ENCODE measurements at regions of chr3 and their contacts with region 1.

Region 1: DNA sequence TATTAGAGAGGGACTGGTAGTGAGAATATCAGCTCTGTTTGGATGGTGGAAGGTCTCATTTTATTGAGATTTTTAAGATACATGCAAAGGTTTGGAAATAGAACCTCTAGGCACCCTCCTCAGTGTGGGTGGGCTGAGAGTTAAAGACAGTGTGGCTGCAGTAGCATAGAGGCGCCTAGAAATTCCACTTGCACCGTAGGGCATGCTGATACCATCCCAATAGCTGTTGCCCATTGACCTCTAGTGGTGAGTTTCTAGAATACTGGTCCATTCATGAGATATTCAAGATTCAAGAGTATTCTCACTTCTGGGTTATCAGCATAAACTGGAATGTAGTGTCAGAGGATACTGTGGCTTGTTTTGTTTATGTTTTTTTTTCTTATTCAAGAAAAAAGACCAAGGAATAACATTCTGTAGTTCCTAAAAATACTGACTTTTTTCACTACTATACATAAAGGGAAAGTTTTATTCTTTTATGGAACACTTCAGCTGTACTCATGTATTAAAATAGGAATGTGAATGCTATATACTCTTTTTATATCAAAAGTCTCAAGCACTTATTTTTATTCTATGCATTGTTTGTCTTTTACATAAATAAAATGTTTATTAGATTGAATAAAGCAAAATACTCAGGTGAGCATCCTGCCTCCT is 87.2 kb downstream of the TGFBR2 start:
- DNase-seq: peak in 1 of 2 donors; percentile 59
- ATAC-seq: peak; percentile 76 to 88 (median 84)
- H3K4me3 ChIP-seq: no peak overlapping the region
- H3K27ac ChIP-seq: peak overlapping the region in 7 of 10 donors; percentile 8 to 64 (median 45)
- H3K4me1 ChIP-seq: peaks cover 11 to 94% (median 68%) of the 10 kb centered on the region in 9 donors
- H3K27me3 ChIP-seq: no peaks in the 10 kb centered on the region
- CTCF ChIP-seq: peak; percentile 70 to 90 (median 81)

Region 2: DNA sequence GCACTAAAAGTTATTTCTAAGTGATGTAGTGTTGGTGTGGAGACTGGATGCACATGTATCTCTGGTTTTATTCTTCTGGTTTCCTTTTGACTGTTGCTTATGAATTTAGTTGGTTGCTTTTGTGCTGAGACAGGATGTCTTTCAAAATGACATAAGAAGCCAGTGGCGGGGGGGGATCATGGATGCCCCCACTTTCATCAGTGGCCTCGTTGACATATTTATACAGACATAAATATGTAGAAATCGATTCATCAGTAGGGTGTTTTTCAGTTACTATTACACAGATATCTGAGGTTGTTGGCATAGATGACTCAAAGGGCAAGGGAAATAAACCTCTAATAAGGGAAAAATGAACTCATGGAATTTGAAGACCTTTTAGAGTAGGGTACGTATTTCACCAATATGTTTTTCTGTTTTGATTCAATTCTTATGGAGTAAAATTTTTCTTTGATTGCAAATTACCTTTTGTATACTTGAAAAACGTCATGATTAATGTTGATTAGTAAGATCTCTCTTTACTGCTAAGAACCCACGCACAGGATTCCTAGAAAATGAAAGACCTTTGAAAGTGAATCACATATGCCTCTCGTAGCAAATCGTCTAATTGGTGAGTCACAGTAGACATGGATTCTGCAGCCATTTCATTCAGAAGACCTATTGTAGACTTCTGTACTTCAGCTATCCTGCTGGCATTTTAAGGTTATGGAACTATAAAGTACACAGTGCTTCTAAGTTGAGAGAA is 1510.1 kb before region 1 on chr3:
- intact Hi-C with region 1: no loop called
- DNase-seq: no peak
- ATAC-seq: no peak
- H3K4me3 ChIP-seq: no peak overlapping the region
- H3K27ac ChIP-seq: no peak overlapping the region
- H3K4me1 ChIP-seq: peaks cover 0 to 36% (median 13%) of the 10 kb centered on the region in 9 donors
- H3K27me3 ChIP-seq: no peaks in the 10 kb centered on the region
- CTCF ChIP-seq: no peak

Region 3: GRCh38 chr3:30042274-30042859 is 651.2 kb before region 1 on chr3:
- intact Hi-C with region 1: loop called in 6 of 10 experiments (anchors 2 to 10 kb)
- DNase-seq: peak in 1 of 2 donors; percentile 72
- ATAC-seq: peak in 6 of 8 donors; percentile 43 to 78 (median 64)
- H3K4me3 ChIP-seq: no peak overlapping the region
- H3K27ac ChIP-seq: no peak overlapping the region
- H3K4me1 ChIP-seq: peaks cover 0 to 21% (median 4%) of the 10 kb centered on the region in 9 donors
- H3K27me3 ChIP-seq: no peaks in the 10 kb centered on the region
- CTCF ChIP-seq: peak; percentile 54 to 85 (median 79)

Region 4: DNA sequence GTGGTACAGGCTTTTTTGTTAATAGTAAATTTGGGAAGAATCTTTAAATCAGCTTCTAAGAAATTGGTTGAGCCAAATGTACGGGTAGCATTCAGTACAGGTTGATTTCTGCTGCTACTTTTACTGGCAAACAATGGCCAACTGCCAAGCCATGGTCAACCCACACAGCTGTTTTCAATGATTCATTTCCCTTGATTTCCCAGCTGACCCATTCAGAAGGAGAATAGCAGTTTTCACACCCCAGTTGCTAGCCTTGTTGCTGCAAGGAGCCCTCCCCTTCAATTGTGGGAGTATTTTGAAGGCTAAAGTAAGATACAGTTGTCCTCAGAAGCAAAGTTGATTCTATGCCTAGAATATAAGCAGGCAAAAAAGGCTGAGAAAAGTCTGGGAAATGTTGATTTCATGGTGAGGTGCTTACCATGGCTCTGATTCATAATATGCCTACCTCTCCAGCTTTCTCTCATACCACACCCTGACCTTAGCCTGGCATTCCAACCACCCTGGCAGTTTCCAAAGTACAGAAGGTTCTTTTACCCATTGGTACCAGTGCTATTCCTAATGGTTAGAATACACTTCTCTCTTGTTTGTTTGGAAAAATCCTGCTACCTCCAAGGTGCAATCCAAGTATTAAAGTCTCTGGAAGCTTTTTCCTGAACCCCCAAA is 407.5 kb before region 1 on chr3:
- intact Hi-C with region 1: loop called in 2 of 10 experiments (anchors 5 to 10 kb)
- DNase-seq: peak; percentile 54 to 86
- ATAC-seq: peak; percentile 87 to 96 (median 93)
- H3K4me3 ChIP-seq: no peak overlapping the region
- H3K27ac ChIP-seq: peak overlapping the region in 8 of 10 donors; percentile 21 to 76 (median 64)
- H3K4me1 ChIP-seq: peaks cover 0 to 65% (median 36%) of the 10 kb centered on the region in 9 donors
- H3K27me3 ChIP-seq: no peaks in the 10 kb centered on the region
- CTCF ChIP-seq: no peak

Region 5: GRCh38 chr3:30347679-30348216 is 345.8 kb before region 1 on chr3:
- intact Hi-C with region 1: loop called in 1 of 10 experiments (anchors 10 kb)
- DNase-seq: no peak
- ATAC-seq: no peak
- H3K4me3 ChIP-seq: no peak overlapping the region
- H3K27ac ChIP-seq: peak overlapping the region in 3 of 10 donors; percentile 39 to 66 (median 65)
- H3K4me1 ChIP-seq: peaks cover 3 to 85% (median 51%) of the 10 kb centered on the region in 9 donors
- H3K27me3 ChIP-seq: no peaks in the 10 kb centered on the region
- CTCF ChIP-seq: no peak

Region 6: GRCh38 chr3:30453360-30454039 is 240.1 kb before region 1 on chr3:
- intact Hi-C with region 1: loop called in 4 of 10 experiments (anchors 10 kb)
- DNase-seq: peak in 1 of 2 donors; percentile 68
- ATAC-seq: peak; percentile 59 to 88 (median 80)
- H3K4me3 ChIP-seq: no peak overlapping the region
- H3K27ac ChIP-seq: peak overlapping the region in 9 of 10 donors; percentile 6 to 76 (median 51)
- H3K4me1 ChIP-seq: peaks cover 0 to 38% (median 9%) of the 10 kb centered on the region in 9 donors
- H3K27me3 ChIP-seq: no peaks in the 10 kb centered on the region
- CTCF ChIP-seq: no peak

Region 7: GRCh38 chr3:30524357-30525040 is 169.1 kb before region 1 on chr3:
- intact Hi-C with region 1: loop called in 6 of 10 experiments (anchors 2 to 10 kb)
- DNase-seq: no peak
- ATAC-seq: peak in 1 of 8 donors; percentile 12
- H3K4me3 ChIP-seq: no peak overlapping the region
- H3K27ac ChIP-seq: no peak overlapping the region
- H3K4me1 ChIP-seq: peaks cover 0 to 50% (median 27%) of the 10 kb centered on the region in 9 donors
- H3K27me3 ChIP-seq: no peaks in the 10 kb centered on the region
- CTCF ChIP-seq: no peak

Region 8: GRCh38 chr3:30681643-30682211 is 11.9 kb before region 1 on chr3:
- intact Hi-C with region 1: no loop called
- DNase-seq: peak; percentile 57 to 64
- ATAC-seq: peak; percentile 55 to 75 (median 66)
- H3K4me3 ChIP-seq: peak overlapping the region in 1 of 10 donors; percentile 20
- H3K27ac ChIP-seq: peak overlapping the region; percentile 51 to 83 (median 67)
- H3K4me1 ChIP-seq: peaks cover 17 to 97% (median 89%) of the 10 kb centered on the region in 9 donors
- H3K27me3 ChIP-seq: no peaks in the 10 kb centered on the region
- CTCF ChIP-seq: no peak